ENCODE measurements at regions of chr2 and their contacts with region 1.

Region 1: GRCh38 chr2:176261136-176261535 is 8.1 kb upstream of the MTX2 start:
- DNase-seq: no peak
- H3K4me3 ChIP-seq: no peak overlapping the region
- H3K27ac ChIP-seq: no peak overlapping the region
- H3K4me1 ChIP-seq: no peaks in the 10 kb centered on the region
- H3K27me3 ChIP-seq: no peaks in the 10 kb centered on the region
- CTCF ChIP-seq: no peak

Region 2: DNA sequence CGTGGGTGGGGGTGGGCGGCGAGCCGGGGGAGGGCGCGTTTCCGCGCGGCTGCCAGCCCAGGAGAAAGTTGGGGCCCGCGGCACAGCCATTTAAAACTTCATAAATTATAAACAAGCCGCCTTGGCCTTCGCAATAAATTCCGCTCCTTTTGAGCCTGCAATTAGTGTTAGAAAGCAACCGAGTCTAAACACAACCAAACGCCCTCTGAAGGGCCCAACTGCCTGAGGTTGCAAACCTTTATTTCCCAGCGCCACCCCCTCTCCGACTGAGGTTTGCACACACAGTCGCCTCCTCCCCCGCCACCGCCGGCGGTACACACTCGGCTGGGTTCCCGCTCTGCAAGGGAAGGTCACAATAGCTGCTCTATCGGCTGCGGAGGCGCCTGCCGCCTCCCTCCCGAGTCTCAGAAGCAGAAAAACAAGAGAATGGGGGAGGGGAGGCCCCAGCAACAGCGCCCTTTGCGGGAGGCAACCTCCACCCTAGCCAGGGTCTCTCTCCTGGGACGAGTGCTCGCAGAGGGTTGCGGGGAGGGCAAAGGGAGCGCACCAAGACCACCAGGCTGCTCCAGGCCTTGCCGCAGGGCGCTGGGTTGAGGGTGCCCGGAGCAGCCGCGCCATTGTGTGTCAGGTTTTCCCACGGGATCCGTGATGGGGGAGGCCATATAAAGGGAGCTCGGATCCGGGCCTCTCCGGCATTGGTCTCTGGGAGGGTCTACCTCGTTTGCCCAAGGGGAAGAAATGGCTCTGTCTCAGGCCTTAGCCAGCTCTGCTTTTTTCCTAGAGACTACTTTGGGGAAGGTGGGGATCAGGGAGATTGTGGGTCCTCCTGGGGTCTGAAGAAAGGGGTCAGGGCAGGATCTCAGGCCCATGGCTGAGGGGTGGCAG is 86.1 kb before region 1 on chr2:
- CTCF ChIA-PET with region 1: interaction called, 26 read pairs
- dilution Hi-C with region 1: no loop called
- in situ Hi-C with region 1: no loop called
- intact Hi-C with region 1: no loop called
- DNase-seq: no peak
- H3K4me3 ChIP-seq: no peak overlapping the region
- H3K27ac ChIP-seq: no peak overlapping the region
- H3K4me1 ChIP-seq: no peaks in the 10 kb centered on the region
- H3K27me3 ChIP-seq: peaks cover 76% of the 10 kb centered on the region
- CTCF ChIP-seq: no peak